Pancreas (tissue), 10 donors: ENCODE measurements at regions of chr3 and their contacts with region 1.

Region 1: GRCh38 chr3:148943506-148944205 is 47.7 kb upstream of the GYG1 start:
- DNase-seq: peak in 3 of 6 donors; percentile 11 to 27 (median 24)
- ATAC-seq: peak; percentile 84 to 93 (median 91)
- H3K4me3 ChIP-seq: no peak overlapping the region
- H3K27ac ChIP-seq: no peak overlapping the region
- H3K4me1 ChIP-seq: peaks cover 0 to 3% (median 0%) of the 10 kb centered on the region in 3 donors
- H3K27me3 ChIP-seq: no peaks in the 10 kb centered on the region
- CTCF ChIP-seq: peak; percentile 43 to 59 (median 56)

Region 2: DNA sequence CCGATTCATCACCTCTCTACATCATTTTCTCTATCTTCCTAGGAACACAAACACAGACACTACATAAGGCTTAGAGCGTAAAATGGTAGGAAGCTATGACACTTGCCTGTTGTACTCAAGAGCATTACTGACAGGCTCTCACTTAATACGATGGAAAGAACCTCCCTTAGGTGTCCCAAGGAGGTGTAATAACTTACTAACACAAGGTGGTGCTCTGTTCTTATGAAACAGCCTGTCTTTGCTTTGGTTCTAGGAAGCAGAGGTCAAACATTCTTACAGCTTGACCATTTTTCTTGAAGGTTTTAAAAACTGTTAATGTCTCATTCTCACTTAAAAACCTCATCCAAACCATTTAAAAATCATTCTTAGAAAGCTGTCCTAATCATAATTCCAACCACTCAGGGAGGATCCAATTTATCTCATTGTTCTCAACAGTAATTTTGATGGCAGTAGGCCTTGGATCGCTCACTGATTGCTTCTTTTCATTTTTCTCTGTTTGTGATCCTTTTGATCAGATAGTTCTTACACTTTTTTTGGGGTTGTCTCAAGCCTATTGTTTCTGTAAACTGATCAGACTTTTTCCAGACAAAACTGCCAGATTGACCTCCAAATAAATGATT is 563.8 kb before region 1 on chr3:
- intact Hi-C with region 1: loop called in 1 of 3 experiments (anchors 5 kb)
- DNase-seq: peak in 1 of 6 donors; percentile 13
- ATAC-seq: peak; percentile 84 to 99 (median 96)
- H3K4me3 ChIP-seq: no peak overlapping the region
- H3K27ac ChIP-seq: no peak overlapping the region
- H3K4me1 ChIP-seq: no peaks in the 10 kb centered on the region
- H3K27me3 ChIP-seq: no peaks in the 10 kb centered on the region
- CTCF ChIP-seq: peak; percentile 7 to 43 (median 33)

Region 3: GRCh38 chr3:148727247-148727646 is 216.4 kb before region 1 on chr3:
- intact Hi-C with region 1: loop called in 2 of 3 experiments (anchors 5 to 10 kb)
- DNase-seq: peak in 4 of 6 donors; percentile 36 to 65 (median 57)
- ATAC-seq: peak; percentile 60 to 83 (median 78)
- H3K4me3 ChIP-seq: no peak overlapping the region
- H3K27ac ChIP-seq: no peak overlapping the region
- H3K4me1 ChIP-seq: peaks cover 0 to 37% (median 13%) of the 10 kb centered on the region in 3 donors
- H3K27me3 ChIP-seq: no peaks in the 10 kb centered on the region
- CTCF ChIP-seq: peak; percentile 7 to 32 (median 28)

Region 4: GRCh38 chr3:148866261-148866660 is 77.4 kb before region 1 on chr3:
- intact Hi-C with region 1: loop called in 2 of 3 experiments (anchors 5 kb)
- DNase-seq: no peak
- ATAC-seq: no peak
- H3K4me3 ChIP-seq: no peak overlapping the region
- H3K27ac ChIP-seq: no peak overlapping the region
- H3K4me1 ChIP-seq: peaks cover 0 to 4% (median 0%) of the 10 kb centered on the region in 3 donors
- H3K27me3 ChIP-seq: no peaks in the 10 kb centered on the region
- CTCF ChIP-seq: no peak

Region 5: GRCh38 chr3:149003653-149004305 is 60.1 kb after region 1 on chr3:
- intact Hi-C with region 1: no loop called
- DNase-seq: no peak
- ATAC-seq: peak in 2 of 4 donors; percentile 60 to 71
- H3K4me3 ChIP-seq: no peak overlapping the region
- H3K27ac ChIP-seq: no peak overlapping the region
- H3K4me1 ChIP-seq: no peaks in the 10 kb centered on the region
- H3K27me3 ChIP-seq: no peaks in the 10 kb centered on the region
- CTCF ChIP-seq: no peak

Region 6: DNA sequence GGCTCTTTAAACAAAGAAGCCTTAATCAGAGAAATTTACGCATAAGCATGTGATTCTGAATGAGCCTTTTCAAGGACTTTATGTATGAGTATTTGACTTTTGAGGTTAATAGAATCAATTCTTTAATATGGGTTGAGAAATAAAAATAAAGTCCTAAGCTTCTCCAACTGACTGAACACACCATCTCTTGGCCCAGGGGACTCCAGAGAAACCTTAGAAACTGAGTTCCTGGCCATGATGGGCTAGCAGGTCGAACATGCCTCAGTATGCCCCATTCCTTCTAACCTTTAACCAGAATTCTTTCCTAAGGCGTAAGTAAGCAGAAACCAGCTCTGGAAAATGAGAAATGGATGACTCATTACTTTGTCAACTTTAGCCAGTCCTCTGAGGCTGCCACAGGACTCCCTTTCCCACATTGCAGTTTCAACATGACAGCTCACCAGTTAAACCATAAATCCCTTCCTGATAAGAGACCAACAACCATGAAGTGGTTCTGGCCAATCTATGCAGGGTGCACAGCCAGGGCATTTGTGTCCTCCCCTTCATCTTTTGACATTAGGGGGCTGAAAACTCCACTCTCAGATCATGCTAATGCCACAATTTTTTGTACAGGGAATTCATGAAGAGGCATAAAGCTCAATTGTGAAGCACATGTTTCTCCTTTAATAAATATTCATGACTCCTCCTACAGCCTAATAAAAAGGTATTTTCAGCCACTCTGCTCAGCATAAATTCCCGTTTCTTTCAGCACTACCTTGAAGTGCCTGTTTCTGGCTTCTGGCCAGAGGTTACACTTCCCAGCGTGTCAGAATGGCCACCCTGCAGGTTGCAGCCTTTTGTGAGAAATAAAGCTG is 356.5 kb after region 1 on chr3:
- intact Hi-C with region 1: no loop called
- DNase-seq: peak in 4 of 6 donors; percentile 45 to 73 (median 62)
- ATAC-seq: peak; percentile 93 to 96 (median 95)
- H3K4me3 ChIP-seq: no peak overlapping the region
- H3K27ac ChIP-seq: peak overlapping the region; percentile 47 to 89 (median 70)
- H3K4me1 ChIP-seq: peaks cover 8 to 31% (median 9%) of the 10 kb centered on the region in 3 donors
- H3K27me3 ChIP-seq: no peaks in the 10 kb centered on the region
- CTCF ChIP-seq: no peak